ENCODE measurements at regions of chr10 and their contacts with region 1.

Region 1: GRCh38 chr10:104925232-104925851 is 284.3 kb downstream of the SORCS3 start:
- DNase-seq: peak; percentile 34 to 71 (median 55)
- H3K4me3 ChIP-seq: no peak overlapping the region
- H3K27ac ChIP-seq: no peak overlapping the region
- H3K4me1 ChIP-seq: no peaks in the 10 kb centered on the region
- H3K27me3 ChIP-seq: no peaks in the 10 kb centered on the region
- CTCF ChIP-seq: peak; percentile 26 to 65 (median 52)
- POLR2A ChIP-seq: no peak

Region 2: GRCh38 chr10:104406715-104407650 is 518.4 kb before region 1 on chr10:
- intact Hi-C with region 1: loop called in 1 of 2 experiments (anchors 10 kb)
- DNase-seq: peak in 1 of 7 donors; percentile 8
- H3K4me3 ChIP-seq: no peak overlapping the region
- H3K27ac ChIP-seq: no peak overlapping the region
- H3K4me1 ChIP-seq: no peaks in the 10 kb centered on the region
- H3K27me3 ChIP-seq: no peaks in the 10 kb centered on the region
- CTCF ChIP-seq: peak; percentile 47 to 84 (median 74)
- POLR2A ChIP-seq: no peak

Region 3: DNA sequence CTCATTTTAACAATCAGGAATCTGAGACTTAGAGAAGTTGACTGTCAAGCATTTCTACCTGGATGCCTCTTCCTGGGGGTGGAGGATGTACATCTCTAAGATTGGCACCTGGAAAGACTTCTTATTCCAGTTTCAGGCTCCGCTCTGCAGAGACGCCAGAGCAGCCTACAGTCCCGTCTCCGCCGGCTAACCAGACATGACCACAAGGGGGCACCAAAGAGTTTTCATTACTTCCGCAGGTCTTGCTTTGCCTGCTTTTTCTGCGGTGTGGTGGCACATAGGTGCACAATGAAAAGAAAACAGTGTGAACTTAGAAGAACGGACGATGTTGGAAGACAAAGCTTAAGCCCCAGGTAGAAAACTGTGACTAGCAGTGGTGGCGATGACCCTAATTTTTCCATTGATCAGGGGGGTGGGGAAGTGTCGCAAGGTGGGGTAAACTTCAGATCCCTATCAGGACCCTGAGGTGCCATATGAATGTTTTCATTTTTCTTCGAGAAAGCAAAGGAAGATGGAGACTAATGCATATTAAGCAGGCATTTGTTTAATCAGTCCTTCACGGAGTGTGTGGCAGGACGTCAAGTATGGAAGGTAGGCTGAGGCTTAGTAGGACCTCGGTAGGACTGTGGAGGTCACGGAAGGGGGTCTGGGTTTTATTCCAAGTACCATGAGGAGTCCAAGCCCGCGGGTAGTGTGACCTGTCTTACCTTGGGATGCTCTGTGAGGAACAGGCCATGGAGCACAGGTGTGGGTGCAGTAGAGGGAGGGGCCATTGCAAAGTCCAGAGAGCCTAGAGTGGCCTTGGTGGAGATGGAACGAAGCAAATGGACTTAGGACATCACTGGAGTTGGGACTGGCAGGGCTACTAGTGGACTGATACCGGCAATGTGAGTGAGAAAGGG is 344.3 kb before region 1 on chr10:
- intact Hi-C with region 1: loop called in 1 of 2 experiments (anchors 10 kb)
- DNase-seq: peak; percentile 63 to 91 (median 79)
- H3K4me3 ChIP-seq: no peak overlapping the region
- H3K27ac ChIP-seq: no peak overlapping the region
- H3K4me1 ChIP-seq: no peaks in the 10 kb centered on the region
- H3K27me3 ChIP-seq: peaks cover 10% of the 10 kb centered on the region
- CTCF ChIP-seq: peak; percentile 60 to 93 (median 71)
- POLR2A ChIP-seq: no peak

Region 4: DNA sequence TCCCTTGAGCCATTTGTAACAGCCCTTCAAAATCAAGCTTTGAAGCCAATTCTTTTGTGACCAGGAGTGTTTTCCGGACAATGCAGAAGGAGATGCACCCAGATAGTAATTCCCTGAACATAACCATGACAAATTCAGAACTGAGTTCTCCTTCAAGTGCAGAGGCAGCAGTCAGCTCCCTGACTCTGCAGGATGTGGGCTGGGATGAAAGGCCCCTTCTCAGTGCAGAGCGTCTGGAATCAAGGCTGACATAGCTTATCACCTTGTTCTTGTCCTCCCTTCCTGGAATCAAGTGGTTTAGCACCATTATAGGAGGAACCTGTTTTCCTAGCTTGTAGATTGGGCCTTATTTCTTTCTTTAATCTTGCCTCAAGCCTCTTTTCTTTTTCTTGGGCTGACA is 140.9 kb before region 1 on chr10:
- intact Hi-C with region 1: loop called in 1 of 2 experiments (anchors 10 kb)
- DNase-seq: no peak
- H3K4me3 ChIP-seq: no peak overlapping the region
- H3K27ac ChIP-seq: no peak overlapping the region
- H3K4me1 ChIP-seq: no peaks in the 10 kb centered on the region
- H3K27me3 ChIP-seq: no peaks in the 10 kb centered on the region
- CTCF ChIP-seq: no peak
- POLR2A ChIP-seq: no peak